CD14-positive monocyte (primary cell): ENCODE measurements at regions of chr22 and their contacts with region 1.

Region 1: DNA sequence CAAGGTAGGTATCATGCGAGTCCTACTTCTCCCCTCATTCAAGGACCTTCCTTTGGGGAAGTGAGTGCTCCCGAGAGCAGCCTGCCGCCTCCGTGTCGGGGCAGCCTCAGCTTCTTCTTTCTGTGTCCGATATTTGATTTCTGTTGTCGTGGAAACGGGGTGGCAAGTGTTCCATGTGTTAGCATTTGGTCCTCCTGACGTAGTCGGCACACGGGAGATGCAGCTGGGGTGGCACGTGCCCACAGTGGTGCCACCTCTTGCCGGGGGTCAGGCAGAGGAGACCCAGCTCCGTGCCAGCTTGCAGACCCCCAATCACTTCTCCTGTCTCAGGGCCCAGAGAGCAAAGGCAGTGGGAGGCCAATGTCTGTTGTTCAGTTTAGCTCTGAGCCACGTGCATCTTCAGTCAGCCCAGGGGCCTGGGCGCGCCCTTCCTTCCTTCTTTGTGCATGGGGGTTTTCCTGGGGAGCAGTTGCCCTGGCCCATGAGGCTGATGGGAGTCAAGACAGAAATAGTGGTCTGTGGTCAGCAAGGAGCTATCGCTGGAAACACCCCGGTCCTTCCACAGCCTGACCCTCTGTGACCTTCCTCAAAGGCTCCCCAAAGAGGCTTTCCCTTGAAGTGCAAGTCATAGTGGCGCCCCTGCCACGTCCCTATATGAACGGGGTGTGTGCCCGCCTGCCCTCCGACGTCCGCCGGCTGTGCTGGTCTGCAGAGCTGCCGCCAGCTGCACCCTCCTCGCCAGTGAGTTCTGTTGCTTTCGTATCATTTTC is 44.5 kb downstream of the PARVB start:
- DNase-seq: peak; percentile 95 to 99 (median 98)
- H3K4me3 ChIP-seq: peak overlapping the region in 1 of 3 experiments; percentile 52
- H3K4me3 Mint-ChIP-seq: peak overlapping the region; percentile 69 to 88
- H3K27ac ChIP-seq: peak overlapping the region; percentile 94 to 97
- H3K27ac Mint-ChIP-seq: peak overlapping the region; percentile 98 to 100 (median 100)
- H3K4me1 ChIP-seq: peaks cover 33 to 35% of the 10 kb centered on the region in 2 donors
- H3K4me1 Mint-ChIP-seq: peaks cover 42% of the 10 kb centered on the region
- H3K27me3 ChIP-seq: no peaks in the 10 kb centered on the region
- H3K27me3 Mint-ChIP-seq: peaks cover 5 to 7% (median 5%) of the 10 kb centered on the region in 3 donors
- CTCF ChIP-seq: no peak

Region 2: DNA sequence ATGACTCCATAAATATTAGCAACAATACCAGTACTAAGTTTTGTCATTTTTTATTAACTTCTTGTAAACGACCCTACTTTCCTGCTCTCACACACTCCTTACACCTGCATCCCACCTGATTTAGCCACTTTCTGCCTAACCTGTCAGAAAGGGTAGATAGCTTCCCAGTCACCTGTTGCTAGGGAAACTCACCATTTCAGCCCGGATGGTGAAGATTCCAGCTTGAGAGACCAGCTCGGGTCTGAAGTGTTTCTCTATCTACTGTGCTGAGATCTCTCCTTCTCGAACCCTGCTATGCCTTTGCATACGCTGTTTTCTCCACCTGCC is 112.1 kb after region 1 on chr22 and contains the start of gene PARVG:
- intact Hi-C with region 1: loop called in 1 of 2 experiments (anchors 5 kb)
- DNase-seq: peak; percentile 47 to 62 (median 54)
- H3K4me3 ChIP-seq: peak within 1 kb of the TSS; percentile 56 to 90 (median 86)
- H3K4me3 Mint-ChIP-seq: peak within 1 kb of the TSS; percentile 90 to 95
- H3K27ac ChIP-seq: peak within 1 kb of the TSS; percentile 93 to 97
- H3K27ac Mint-ChIP-seq: peak within 1 kb of the TSS; percentile 96 to 100 (median 98)
- H3K4me1 ChIP-seq: peaks cover 32 to 44% of the 10 kb centered on the region in 2 donors
- H3K4me1 Mint-ChIP-seq: peaks cover 35% of the 10 kb centered on the region
- H3K27me3 ChIP-seq: no peaks in the 10 kb centered on the region
- H3K27me3 Mint-ChIP-seq: no peaks in the 10 kb centered on the region
- CTCF ChIP-seq: no peak
- polyA plus RNA-seq, gene PARVG: 169 to 577 (median 190) TPM